Activated T-helper 2 cell treated with anti-CD3 and anti-CD28 coated beads, Interferon-gamma antibody, Interleukin-2, Interleukin-4, amounts not matched to agents 10 μg/mL and 5 μg/mL and 100 μg/mL, durations not matched to agents 14 hours and 24 hours and 36 hours (primary cell): ENCODE measurements at regions of chr12 and their contacts with region 1.

Region 1: GRCh38 chr12:116194935-116195431 is 82.5 kb downstream of the MED13L start:
- DNase-seq: peak; percentile 40
- H3K4me3 Mint-ChIP-seq: peak overlapping the region; percentile 2
- H3K27ac Mint-ChIP-seq: peak overlapping the region; percentile 42
- H3K4me1 Mint-ChIP-seq: peaks cover 32% of the 10 kb centered on the region
- H3K27me3 Mint-ChIP-seq: no peaks in the 10 kb centered on the region

Region 2: GRCh38 chr12:116015525-116015924 is 179.5 kb before region 1 on chr12:
- intact Hi-C with region 1: loop called (anchors 5 kb)
- DNase-seq: no peak
- H3K4me3 Mint-ChIP-seq: no peak overlapping the region
- H3K27ac Mint-ChIP-seq: no peak overlapping the region
- H3K4me1 Mint-ChIP-seq: peaks cover 2% of the 10 kb centered on the region
- H3K27me3 Mint-ChIP-seq: no peaks in the 10 kb centered on the region

Region 3: GRCh38 chr12:116080415-116080814 is 114.6 kb before region 1 on chr12:
- intact Hi-C with region 1: loop called (anchors 5 kb)
- DNase-seq: no peak
- H3K4me3 Mint-ChIP-seq: no peak overlapping the region
- H3K27ac Mint-ChIP-seq: no peak overlapping the region
- H3K4me1 Mint-ChIP-seq: peaks cover 16% of the 10 kb centered on the region
- H3K27me3 Mint-ChIP-seq: no peaks in the 10 kb centered on the region

Region 4: DNA sequence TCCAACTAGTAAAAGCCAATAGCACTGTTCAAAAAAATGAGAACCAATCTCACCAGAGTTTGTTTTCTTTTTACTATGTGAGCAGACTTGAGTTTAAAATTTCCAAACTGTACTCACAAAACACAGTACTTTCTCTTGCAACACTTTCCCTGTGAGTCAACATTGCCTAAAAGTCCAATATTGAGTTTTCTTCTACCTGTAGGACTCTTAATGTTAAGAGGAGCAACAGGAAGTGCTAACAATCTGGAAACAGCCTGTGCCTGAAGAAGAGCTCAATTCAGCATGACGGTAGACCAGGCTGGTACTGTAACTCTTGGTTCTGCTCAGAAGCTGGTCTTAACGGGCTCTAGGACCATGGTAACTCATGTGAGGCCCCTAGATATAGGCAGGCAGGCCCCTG is 61.8 kb before region 1 on chr12:
- intact Hi-C with region 1: no loop called
- DNase-seq: no peak
- H3K4me3 Mint-ChIP-seq: no peak overlapping the region
- H3K27ac Mint-ChIP-seq: peak overlapping the region; percentile 29
- H3K4me1 Mint-ChIP-seq: peaks cover 48% of the 10 kb centered on the region
- H3K27me3 Mint-ChIP-seq: no peaks in the 10 kb centered on the region

Region 5: DNA sequence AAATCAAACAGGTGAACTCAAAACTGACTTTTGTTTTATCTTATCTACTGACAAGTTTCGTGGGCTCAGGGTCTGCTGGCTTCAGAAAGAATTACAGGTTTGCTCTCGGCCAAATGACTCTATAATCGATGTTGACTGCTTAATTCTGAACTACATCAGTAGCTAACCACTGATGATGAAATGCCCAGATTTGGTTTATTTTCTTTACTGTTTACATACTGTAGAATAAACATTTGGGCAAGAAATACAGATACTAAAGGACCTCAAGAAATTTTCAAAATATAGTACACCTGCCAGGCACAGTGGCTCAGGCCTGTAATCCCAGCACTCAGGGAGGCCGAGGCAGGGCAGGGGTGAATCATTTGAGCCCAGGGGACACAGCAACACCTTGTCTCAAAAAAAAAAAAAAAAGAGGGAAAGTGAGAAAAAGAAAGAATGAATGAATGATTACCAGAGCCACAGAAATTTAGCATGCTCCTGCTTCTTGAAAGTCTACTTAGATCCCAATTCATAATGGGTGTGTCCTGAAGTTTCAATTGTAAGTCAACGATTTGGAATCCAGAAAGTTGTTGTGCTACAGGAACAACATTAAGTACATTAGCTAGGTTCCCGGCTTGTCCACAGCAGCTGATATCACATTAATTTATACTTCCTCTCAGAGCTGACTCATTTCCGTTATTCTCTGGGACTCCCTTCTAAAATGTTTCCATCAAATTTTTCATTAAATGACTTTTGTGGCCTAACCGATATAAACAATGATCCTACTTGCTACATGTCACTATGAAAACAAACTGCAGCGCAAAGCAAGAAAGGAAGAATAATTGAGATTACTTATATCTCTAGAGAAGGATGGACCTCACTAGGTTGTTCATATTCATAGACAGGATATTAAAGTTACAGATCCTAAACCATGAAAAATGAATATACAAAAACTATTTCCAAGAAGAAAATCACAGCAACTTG is 51.8 kb before region 1 on chr12:
- intact Hi-C with region 1: loop called (anchors 2 kb)
- DNase-seq: no peak
- H3K4me3 Mint-ChIP-seq: no peak overlapping the region
- H3K27ac Mint-ChIP-seq: peak overlapping the region; percentile 67
- H3K4me1 Mint-ChIP-seq: peaks cover 45% of the 10 kb centered on the region
- H3K27me3 Mint-ChIP-seq: no peaks in the 10 kb centered on the region

Region 6: GRCh38 chr12:116244001-116244400 is 49.0 kb after region 1 on chr12:
- intact Hi-C with region 1: loop called (anchors 10 kb)
- DNase-seq: no peak
- H3K4me3 Mint-ChIP-seq: no peak overlapping the region
- H3K27ac Mint-ChIP-seq: no peak overlapping the region
- H3K4me1 Mint-ChIP-seq: peaks cover 42% of the 10 kb centered on the region
- H3K27me3 Mint-ChIP-seq: no peaks in the 10 kb centered on the region

Region 7: DNA sequence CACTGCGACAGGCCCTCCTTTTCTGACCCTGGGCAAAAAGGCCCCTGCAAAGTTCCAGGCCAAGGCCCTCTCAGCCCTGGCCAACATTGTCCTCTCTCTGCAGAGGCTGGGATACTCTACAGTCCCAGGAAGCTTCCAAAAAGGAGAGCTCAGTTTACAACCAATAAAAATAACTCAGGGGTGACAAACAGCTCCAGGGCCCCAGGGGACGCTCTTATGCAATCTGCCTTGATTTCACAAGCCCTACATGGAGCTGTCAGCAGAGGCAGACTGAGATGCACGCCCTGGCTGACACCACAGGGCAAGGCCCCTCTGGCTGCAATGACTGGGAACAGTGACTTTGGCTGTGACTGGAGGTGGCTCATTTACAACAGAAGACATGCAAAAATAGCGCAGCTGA is 211.5 kb after region 1 on chr12:
- intact Hi-C with region 1: no loop called
- DNase-seq: no peak
- H3K4me3 Mint-ChIP-seq: no peak overlapping the region
- H3K27ac Mint-ChIP-seq: no peak overlapping the region
- H3K4me1 Mint-ChIP-seq: no peaks in the 10 kb centered on the region
- H3K27me3 Mint-ChIP-seq: no peaks in the 10 kb centered on the region